Activated naive CD4-positive, alpha-beta T cell treated with anti-CD3 and anti-CD28 coated beads for 36 hours (primary cell): ENCODE measurements at regions of chr4 and their contacts with region 1.

Region 1: GRCh38 chr4:36325499-36325898 is 44.1 kb downstream of the DTHD1 start:
- DNase-seq: peak; percentile 25
- H3K4me3 Mint-ChIP-seq: no peak overlapping the region
- H3K27ac Mint-ChIP-seq: peak overlapping the region; percentile 52
- H3K4me1 Mint-ChIP-seq: peaks cover 62% of the 10 kb centered on the region
- H3K27me3 Mint-ChIP-seq: no peaks in the 10 kb centered on the region

Region 2: DNA sequence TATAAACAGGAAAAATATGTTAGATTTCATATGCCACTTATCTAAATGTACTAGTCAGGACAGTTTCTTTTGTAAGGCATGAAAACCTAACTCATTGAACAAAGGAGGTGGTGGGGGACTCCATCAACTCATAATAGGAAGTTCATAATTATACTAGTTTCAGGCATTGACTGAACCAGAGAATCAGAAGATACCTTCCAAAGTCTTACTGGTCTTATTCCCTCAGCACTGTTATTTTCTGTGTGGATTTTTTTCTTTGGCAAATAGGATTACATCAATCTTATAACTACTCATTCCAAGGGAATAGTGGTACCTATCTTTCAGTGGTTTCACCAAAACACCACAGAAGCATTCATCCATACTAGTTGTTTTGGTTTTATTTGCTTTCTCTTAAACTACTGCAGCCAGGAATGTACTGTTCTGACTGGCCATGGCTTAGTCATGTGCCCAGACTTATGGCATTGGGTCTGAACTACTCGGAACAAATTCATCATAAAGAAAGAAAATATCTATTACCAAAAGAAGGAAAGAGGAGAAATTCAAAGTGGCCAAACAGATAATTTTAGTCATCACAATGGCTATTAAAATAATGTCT is 355.0 kb before region 1 on chr4:
- CTCF ChIA-PET with region 1: no interaction called
- intact Hi-C with region 1: loop called (anchors 10 kb)
- DNase-seq: no peak
- H3K4me3 Mint-ChIP-seq: no peak overlapping the region
- H3K27ac Mint-ChIP-seq: no peak overlapping the region
- H3K4me1 Mint-ChIP-seq: peaks cover 8% of the 10 kb centered on the region
- H3K27me3 Mint-ChIP-seq: no peaks in the 10 kb centered on the region

Region 3: GRCh38 chr4:36244257-36245079 is 81.0 kb before region 1 on chr4 and contains the start of gene ARAP2:
- CTCF ChIA-PET with region 1: interaction called, 5 read pairs
- intact Hi-C with region 1: loop called (anchors 1 kb)
- DNase-seq: peak; percentile 77
- H3K4me3 Mint-ChIP-seq: peak within 1 kb of the TSS; percentile 94
- H3K27ac Mint-ChIP-seq: peak within 1 kb of the TSS; percentile 88
- H3K4me1 Mint-ChIP-seq: peaks cover 24% of the 10 kb centered on the region
- H3K27me3 Mint-ChIP-seq: no peaks in the 10 kb centered on the region
- total RNA-seq, gene ARAP2: 29.6 to 38.2 TPM

Region 4: DNA sequence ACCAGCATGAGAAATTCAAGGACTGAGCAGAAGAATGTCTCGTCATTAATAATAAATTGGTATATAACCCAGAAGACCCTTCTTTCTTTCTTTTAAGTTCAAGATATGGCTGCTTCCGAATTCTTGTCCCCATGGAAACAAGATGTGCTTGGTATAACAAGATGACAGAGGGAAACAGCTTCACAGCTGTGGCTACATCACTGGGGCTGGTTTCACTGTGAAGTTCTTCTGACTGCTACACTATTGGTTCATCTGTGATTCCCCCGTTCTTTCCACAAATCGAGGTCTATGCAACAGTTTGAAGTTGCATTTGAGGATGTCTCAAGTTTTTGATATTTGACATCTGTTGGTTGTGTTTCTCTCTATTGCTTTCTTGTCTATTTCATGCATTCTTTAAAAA is 56.4 kb before region 1 on chr4:
- CTCF ChIA-PET with region 1: no interaction called
- intact Hi-C with region 1: loop called (anchors 1 kb)
- DNase-seq: peak; percentile 53
- H3K4me3 Mint-ChIP-seq: no peak overlapping the region
- H3K27ac Mint-ChIP-seq: no peak overlapping the region
- H3K4me1 Mint-ChIP-seq: peaks cover 34% of the 10 kb centered on the region
- H3K27me3 Mint-ChIP-seq: no peaks in the 10 kb centered on the region

Region 5: GRCh38 chr4:36385951-36386571 is 60.6 kb after region 1 on chr4:
- CTCF ChIA-PET with region 1: no interaction called
- intact Hi-C with region 1: loop called (anchors 1 kb)
- DNase-seq: peak; percentile 51
- H3K4me3 Mint-ChIP-seq: no peak overlapping the region
- H3K27ac Mint-ChIP-seq: peak overlapping the region; percentile 60
- H3K4me1 Mint-ChIP-seq: peaks cover 26% of the 10 kb centered on the region
- H3K27me3 Mint-ChIP-seq: no peaks in the 10 kb centered on the region

Region 6: GRCh38 chr4:37415845-37416369 is 1090.4 kb after region 1 on chr4:
- CTCF ChIA-PET with region 1: no interaction called
- intact Hi-C with region 1: no loop called
- DNase-seq: no peak
- H3K4me3 Mint-ChIP-seq: no peak overlapping the region
- H3K27ac Mint-ChIP-seq: no peak overlapping the region
- H3K4me1 Mint-ChIP-seq: no peaks in the 10 kb centered on the region
- H3K27me3 Mint-ChIP-seq: peaks cover 2% of the 10 kb centered on the region

Region 7: DNA sequence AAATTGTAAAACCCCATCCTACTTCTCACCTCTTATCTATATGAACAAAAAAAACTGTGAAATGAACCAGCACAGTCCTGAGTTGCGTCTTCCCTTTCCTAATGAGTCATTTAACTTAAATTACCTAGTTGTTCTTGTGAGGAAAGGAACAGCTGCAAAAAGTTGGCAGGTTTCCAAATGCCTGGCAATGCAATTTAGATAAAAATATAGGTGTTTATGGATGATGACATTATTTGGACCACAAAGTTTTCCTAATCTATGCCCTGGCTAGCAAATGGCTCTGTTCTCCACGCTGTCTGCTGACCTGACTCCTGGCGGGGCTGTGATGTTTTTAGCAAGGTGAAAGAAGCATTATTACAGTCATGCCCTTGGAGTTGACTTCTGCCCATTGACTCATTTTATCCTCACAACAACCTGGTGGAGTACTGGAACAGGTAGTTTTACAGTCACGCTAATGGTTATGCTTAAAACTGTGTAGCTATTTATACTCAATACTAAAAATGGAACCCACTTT is 1390.4 kb after region 1 on chr4:
- CTCF ChIA-PET with region 1: no interaction called
- intact Hi-C with region 1: loop called (anchors 5 kb)
- DNase-seq: peak; percentile 80
- H3K4me3 Mint-ChIP-seq: no peak overlapping the region
- H3K27ac Mint-ChIP-seq: peak overlapping the region; percentile 77
- H3K4me1 Mint-ChIP-seq: peaks cover 17% of the 10 kb centered on the region
- H3K27me3 Mint-ChIP-seq: peaks cover 4% of the 10 kb centered on the region

Region 8: DNA sequence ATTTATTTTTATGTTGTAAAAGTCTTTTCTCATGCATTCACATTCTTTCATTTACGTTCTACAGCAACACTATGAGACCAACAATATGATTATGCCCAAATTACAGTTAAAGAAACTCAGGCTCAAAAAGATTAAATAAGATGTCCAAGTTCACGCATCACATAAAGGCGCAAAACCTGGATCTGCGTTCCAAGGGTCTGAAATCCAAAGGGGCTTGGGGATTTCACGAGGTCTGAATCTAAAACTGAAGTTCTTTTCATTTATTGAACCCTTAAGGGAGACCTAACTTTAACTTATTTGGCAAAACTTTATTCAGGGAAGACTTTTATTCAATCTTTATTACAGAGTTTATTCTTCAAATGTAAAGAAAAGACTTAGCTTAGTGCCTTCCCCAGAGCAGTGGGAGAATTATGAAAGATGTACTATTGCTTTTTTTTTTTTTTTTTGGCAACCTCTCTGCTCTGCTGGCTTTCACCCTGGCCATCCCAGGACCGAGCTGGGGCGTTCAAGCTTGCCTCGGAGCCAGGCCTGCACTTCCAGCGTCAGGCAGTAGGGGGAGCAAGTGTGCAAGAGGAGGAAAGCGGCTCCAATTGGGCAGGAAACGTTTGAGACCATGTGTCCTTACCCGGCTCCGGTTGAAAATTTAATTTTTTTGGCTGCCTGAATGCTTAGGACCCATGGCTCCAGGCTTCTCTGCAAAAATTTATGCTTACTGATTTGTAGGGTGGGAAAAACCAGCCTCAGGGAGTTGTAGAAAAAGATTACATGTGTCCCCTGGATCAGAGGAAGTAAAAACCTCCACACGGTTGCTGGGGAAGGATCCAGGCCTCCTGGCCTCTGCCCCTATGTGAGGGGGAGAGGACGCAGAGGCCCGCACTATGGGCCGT is 1994.2 kb after region 1 on chr4:
- CTCF ChIA-PET with region 1: no interaction called
- intact Hi-C with region 1: loop called (anchors 10 kb)
- DNase-seq: peak; percentile 98
- H3K4me3 Mint-ChIP-seq: peak overlapping the region; percentile 76
- H3K27ac Mint-ChIP-seq: peak overlapping the region; percentile 89
- H3K4me1 Mint-ChIP-seq: peaks cover 46% of the 10 kb centered on the region
- H3K27me3 Mint-ChIP-seq: no peaks in the 10 kb centered on the region